Heart right ventricle (tissue), 16 donors: ENCODE measurements at regions of chr10 and their contacts with region 1.

Region 1: GRCh38 chr10:52729271-52730104 is 43.1 kb downstream of the MBL2 start:
- DNase-seq: no peak
- ATAC-seq: peak in 1 of 8 donors; percentile 20
- H3K4me3 ChIP-seq: no peak overlapping the region
- H3K27ac ChIP-seq: no peak overlapping the region
- H3K4me1 ChIP-seq: no peaks in the 10 kb centered on the region
- H3K27me3 ChIP-seq: no peaks in the 10 kb centered on the region
- CTCF ChIP-seq: peak in 7 of 9 donors; percentile 43 to 64 (median 61)

Region 2: DNA sequence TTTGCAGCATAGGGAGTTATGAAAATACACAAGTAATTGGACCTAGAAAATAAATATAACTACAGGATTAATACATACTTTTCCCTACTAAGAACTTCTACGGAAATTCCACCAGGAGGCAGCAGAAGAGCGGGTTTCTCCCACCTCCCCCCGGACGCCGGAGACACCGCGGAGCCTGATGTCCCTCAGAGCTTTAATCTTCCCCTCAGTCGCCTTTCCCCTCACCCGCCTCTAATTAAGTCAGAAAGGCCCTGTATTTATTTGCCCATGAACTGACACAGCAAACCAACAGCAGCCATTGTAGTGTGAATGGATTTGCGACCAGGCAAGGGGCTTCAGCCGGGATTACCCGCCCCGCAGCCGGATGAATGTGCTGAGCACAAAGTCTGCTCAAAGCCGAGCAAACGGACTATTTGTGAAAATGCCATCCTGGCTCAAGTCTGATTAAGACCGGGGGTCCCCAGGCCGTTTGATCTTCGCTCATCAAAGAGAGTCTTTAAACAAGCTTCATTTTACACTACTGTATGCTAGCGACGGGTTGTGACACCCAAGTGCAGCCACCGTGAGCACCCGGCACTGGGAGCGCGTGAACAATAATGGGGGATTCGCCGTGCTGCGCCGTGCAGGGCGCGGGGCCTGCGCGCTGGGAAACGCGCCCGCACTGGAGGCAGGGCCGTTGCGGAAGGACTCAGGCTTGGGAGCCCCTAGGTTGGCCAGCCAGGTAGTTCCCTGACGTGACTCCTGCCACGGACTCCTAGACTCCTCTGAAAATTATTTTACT is 421.0 kb before region 1 on chr10:
- intact Hi-C with region 1: loop called in 1 of 10 experiments (anchors 5 kb)
- DNase-seq: peak; percentile 36 to 46
- ATAC-seq: peak; percentile 80 to 92 (median 88)
- H3K4me3 ChIP-seq: peak overlapping the region; percentile 6 to 60 (median 52)
- H3K27ac ChIP-seq: no peak overlapping the region
- H3K4me1 ChIP-seq: peaks cover 0 to 9% (median 6%) of the 10 kb centered on the region in 9 donors
- H3K27me3 ChIP-seq: peaks cover 0 to 57% (median 21%) of the 10 kb centered on the region in 7 donors
- CTCF ChIP-seq: peak; percentile 28 to 75 (median 66)

Region 3: GRCh38 chr10:52609071-52609470 is 120.4 kb before region 1 on chr10:
- intact Hi-C with region 1: no loop called
- DNase-seq: no peak
- ATAC-seq: no peak
- H3K4me3 ChIP-seq: no peak overlapping the region
- H3K27ac ChIP-seq: no peak overlapping the region
- H3K4me1 ChIP-seq: no peaks in the 10 kb centered on the region
- H3K27me3 ChIP-seq: no peaks in the 10 kb centered on the region
- CTCF ChIP-seq: no peak

Region 4: GRCh38 chr10:52644373-52645186 is 84.9 kb before region 1 on chr10:
- intact Hi-C with region 1: loop called in 8 of 10 experiments (anchors 1 to 5 kb)
- DNase-seq: peak in 1 of 2 donors; percentile 24
- ATAC-seq: peak in 3 of 8 donors; percentile 62 to 77 (median 64)
- H3K4me3 ChIP-seq: no peak overlapping the region
- H3K27ac ChIP-seq: no peak overlapping the region
- H3K4me1 ChIP-seq: peaks cover 0 to 7% (median 0%) of the 10 kb centered on the region in 9 donors
- H3K27me3 ChIP-seq: no peaks in the 10 kb centered on the region
- CTCF ChIP-seq: peak; percentile 56 to 76 (median 69)

Region 5: GRCh38 chr10:52652431-52653262 is 76.8 kb before region 1 on chr10:
- intact Hi-C with region 1: loop called in 1 of 10 experiments (anchors 5 kb)
- DNase-seq: no peak
- ATAC-seq: peak in 7 of 8 donors; percentile 30 to 80 (median 64)
- H3K4me3 ChIP-seq: no peak overlapping the region
- H3K27ac ChIP-seq: peak overlapping the region in 8 of 10 donors; percentile 1 to 64 (median 28)
- H3K4me1 ChIP-seq: peaks cover 0 to 15% (median 0%) of the 10 kb centered on the region in 9 donors
- H3K27me3 ChIP-seq: no peaks in the 10 kb centered on the region
- CTCF ChIP-seq: no peak